Dorsolateral prefrontal cortex (tissue), 120 donors: ENCODE measurements at regions of chr5 and their contacts with region 1.

Region 1: GRCh38 chr5:87400305-87400899 is 12.3 kb downstream of the CCNH start:
- DNase-seq: no peak
- H3K4me3 ChIP-seq: no peak overlapping the region
- H3K27ac ChIP-seq: peak overlapping the region in 11 of 59 donors; percentile 11 to 49 (median 26)
- H3K27me3 ChIP-seq: no peaks in the 10 kb centered on the region
- CTCF ChIP-seq: peak; percentile 54 to 85 (median 76)

Region 2: GRCh38 chr5:87069974-87070624 is 330.3 kb before region 1 on chr5:
- intact Hi-C with region 1: loop called in 1 of 2 experiments (anchors 10 kb)
- DNase-seq: peak in 2 of 10 donors; percentile 32 to 40
- H3K4me3 ChIP-seq: no peak overlapping the region
- H3K27ac ChIP-seq: no peak overlapping the region
- H3K27me3 ChIP-seq: no peaks in the 10 kb centered on the region
- CTCF ChIP-seq: peak in 41 of 56 donors; percentile 3 to 60 (median 31)